ENCODE measurements at regions of chr9 and their contacts with region 1.

Region 1: GRCh38 chr9:36204906-36205547 is 14.3 kb downstream of the CLTA start:
- DNase-seq: no peak
- ATAC-seq: peak; percentile 60
- H3K4me3 ChIP-seq: no peak overlapping the region
- H3K27ac ChIP-seq: no peak overlapping the region
- H3K4me1 ChIP-seq: peaks cover 18% of the 10 kb centered on the region
- H3K27me3 ChIP-seq: no peaks in the 10 kb centered on the region
- CTCF ChIP-seq: peak; percentile 42

Region 2: DNA sequence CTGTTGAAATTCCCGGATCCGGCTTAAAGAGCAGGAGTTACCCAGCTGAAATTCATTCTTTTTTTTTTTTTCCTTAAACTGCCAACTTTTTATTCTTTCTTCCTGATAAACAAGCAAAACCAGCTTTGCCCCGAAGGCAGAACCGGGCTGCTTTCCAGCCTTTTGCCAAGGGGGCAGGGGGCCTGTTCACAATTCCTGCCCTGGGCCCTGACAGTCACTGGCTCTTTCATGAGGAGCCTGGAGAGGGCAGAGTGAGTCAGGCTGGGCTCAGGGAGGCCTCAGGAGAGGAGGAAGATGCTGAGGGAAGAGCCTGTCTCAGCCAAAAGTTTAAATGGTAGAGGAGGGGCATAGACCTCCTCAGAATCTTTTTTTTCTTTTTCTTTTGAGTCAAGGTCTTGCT is 63.7 kb before region 1 on chr9:
- CTCF ChIA-PET with region 1: interaction called, 14 read pairs
- POLR2A ChIA-PET with region 1: no interaction called
- intact Hi-C with region 1: no loop called
- DNase-seq: peak; percentile 79
- ATAC-seq: peak; percentile 69
- H3K4me3 ChIP-seq: peak overlapping the region; percentile 11; the same call in 1 of the 2 replicates
- H3K27ac ChIP-seq: peak overlapping the region; percentile 33; the same call in 1 of the 2 replicates
- H3K4me1 ChIP-seq: peaks cover 18% of the 10 kb centered on the region
- H3K27me3 ChIP-seq: no peaks in the 10 kb centered on the region
- CTCF ChIP-seq: peak; percentile 54

Region 3: DNA sequence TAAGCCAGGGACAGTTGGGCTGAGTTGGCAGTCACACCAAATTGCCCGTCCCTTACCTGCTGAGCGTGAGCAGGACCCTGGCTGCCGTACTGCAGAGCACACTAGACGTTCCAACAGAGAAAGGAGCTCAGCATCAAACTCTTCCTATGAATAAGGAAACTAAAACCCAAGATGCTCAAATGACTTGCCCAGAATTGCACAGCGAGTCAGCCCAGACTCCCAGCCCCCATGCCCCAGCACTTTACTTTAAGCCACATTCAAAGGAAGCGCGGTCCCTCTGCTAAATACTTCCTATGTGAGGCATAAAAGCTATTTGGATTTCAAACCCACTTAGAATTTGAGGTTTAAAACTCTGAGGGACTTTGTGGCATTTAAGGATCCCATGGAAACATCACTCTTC is 805.2 kb after region 1 on chr9:
- CTCF ChIA-PET with region 1: no interaction called
- POLR2A ChIA-PET with region 1: no interaction called
- intact Hi-C with region 1: no loop called
- DNase-seq: no peak
- ATAC-seq: no peak
- H3K4me3 ChIP-seq: no peak overlapping the region
- H3K27ac ChIP-seq: no peak overlapping the region
- H3K4me1 ChIP-seq: no peaks in the 10 kb centered on the region
- H3K27me3 ChIP-seq: peaks cover 66% of the 10 kb centered on the region
- CTCF ChIP-seq: no peak